ENCODE measurements at regions of chr16 and their contacts with region 1.

Region 1: GRCh38 chr16:4244254-4245076 is 2.6 kb upstream of the SRL start:
- DNase-seq: no peak
- H3K4me3 ChIP-seq: no peak overlapping the region
- H3K4me3 Mint-ChIP-seq: no peak overlapping the region
- H3K27ac ChIP-seq: no peak overlapping the region
- H3K27ac Mint-ChIP-seq: peak overlapping the region in 3 of 7 donors; percentile 38 to 60 (median 46)
- H3K4me1 ChIP-seq: no peaks in the 10 kb centered on the region
- H3K4me1 Mint-ChIP-seq: peaks cover 8% of the 10 kb centered on the region
- H3K27me3 ChIP-seq: no peaks in the 10 kb centered on the region
- H3K27me3 Mint-ChIP-seq: peaks cover 2 to 14% (median 8%) of the 10 kb centered on the region in 3 donors
- CTCF ChIP-seq: no peak

Region 2: DNA sequence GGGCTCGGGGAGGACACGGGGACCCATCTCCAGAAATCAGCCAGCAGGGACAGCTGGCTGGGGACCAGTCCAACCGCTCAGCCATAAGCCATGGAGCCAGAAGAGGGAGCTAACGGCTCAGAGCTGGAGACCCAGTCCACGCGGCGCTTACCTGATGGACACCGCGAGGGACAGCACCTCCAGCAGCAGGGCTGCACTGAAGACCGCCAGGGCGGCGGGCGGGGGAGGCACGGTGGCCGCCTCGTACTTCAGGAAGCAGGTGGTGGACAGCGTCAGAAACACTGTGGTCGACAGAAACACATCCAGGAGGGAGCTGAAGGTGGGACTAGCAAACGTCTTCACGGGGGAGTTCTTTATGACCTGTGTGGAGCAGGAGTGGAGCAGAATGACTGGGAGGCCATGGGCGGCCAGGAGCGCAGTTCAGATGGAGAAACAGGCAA is 261.4 kb before region 1 on chr16:
- intact Hi-C with region 1: loop called in 1 of 2 experiments (anchors 10 kb)
- DNase-seq: peak; percentile 38 to 71 (median 58)
- H3K4me3 ChIP-seq: no peak overlapping the region
- H3K4me3 Mint-ChIP-seq: no peak overlapping the region
- H3K27ac ChIP-seq: no peak overlapping the region
- H3K27ac Mint-ChIP-seq: peak overlapping the region in 1 of 7 donors; percentile 37
- H3K4me1 ChIP-seq: peaks cover 10% of the 10 kb centered on the region in 2 donors
- H3K4me1 Mint-ChIP-seq: peaks cover 15% of the 10 kb centered on the region
- H3K27me3 ChIP-seq: no peaks in the 10 kb centered on the region
- H3K27me3 Mint-ChIP-seq: peaks cover 0 to 1% (median 1%) of the 10 kb centered on the region in 3 donors
- CTCF ChIP-seq: peak; percentile 77